ENCODE measurements at regions of chr11 and their contacts with region 1.

Region 1: GRCh38 chr11:7571640-7572000 is 57.8 kb downstream of the PPFIBP2 start:
- DNase-seq: no peak
- ATAC-seq: peak; percentile 47
- H3K4me3 ChIP-seq: no peak overlapping the region
- H3K27ac ChIP-seq: no peak overlapping the region
- H3K4me1 ChIP-seq: peaks cover 11% of the 10 kb centered on the region
- H3K27me3 ChIP-seq: no peaks in the 10 kb centered on the region
- CTCF ChIP-seq: peak; percentile 58 to 74 (median 69)
- EP300 ChIP-seq: no peak
- POLR2A ChIP-seq: no peak
- RAD21 ChIP-seq: peak; percentile 60; the same call in 1 of the 2 replicates

Region 2: GRCh38 chr11:7555052-7555699 is 16.4 kb before region 1 on chr11:
- CTCF ChIA-PET with region 1: interaction called, 12 read pairs
- POLR2A ChIA-PET with region 1: no interaction called
- RAD21 ChIA-PET with region 1: interaction called, 11 read pairs
- SMC1A ChIA-PET with region 1: interaction called, 27 read pairs
- in situ Hi-C with region 1: no loop called
- intact Hi-C with region 1: no loop called
- DNase-seq: no peak
- ATAC-seq: no peak
- H3K4me3 ChIP-seq: no peak overlapping the region
- H3K27ac ChIP-seq: no peak overlapping the region
- H3K4me1 ChIP-seq: peaks cover 16% of the 10 kb centered on the region
- H3K27me3 ChIP-seq: no peaks in the 10 kb centered on the region
- CTCF ChIP-seq: no peak
- EP300 ChIP-seq: no peak
- POLR2A ChIP-seq: no peak
- RAD21 ChIP-seq: no peak

Region 3: GRCh38 chr11:7585816-7586215 is 14.2 kb after region 1 on chr11:
- CTCF ChIA-PET with region 1: interaction called, 11 read pairs
- POLR2A ChIA-PET with region 1: interaction called, 3 read pairs
- RAD21 ChIA-PET with region 1: interaction called, 3 read pairs
- SMC1A ChIA-PET with region 1: interaction called, 21 read pairs
- in situ Hi-C with region 1: no loop called
- intact Hi-C with region 1: no loop called
- DNase-seq: no peak
- ATAC-seq: no peak
- H3K4me3 ChIP-seq: no peak overlapping the region
- H3K27ac ChIP-seq: no peak overlapping the region
- H3K4me1 ChIP-seq: 0 out of 2 replicates have a peak, but pooled peaks cover 4% of the 10 kb centered on the region
- H3K27me3 ChIP-seq: no peaks in the 10 kb centered on the region
- CTCF ChIP-seq: no peak
- EP300 ChIP-seq: no peak
- POLR2A ChIP-seq: no peak
- RAD21 ChIP-seq: no peak

Region 4: GRCh38 chr11:7657306-7658025 is 85.8 kb after region 1 on chr11:
- CTCF ChIA-PET with region 1: interaction called, 15 read pairs
- POLR2A ChIA-PET with region 1: no interaction called
- RAD21 ChIA-PET with region 1: interaction called, 7 read pairs
- SMC1A ChIA-PET with region 1: interaction called, 4 read pairs
- in situ Hi-C with region 1: no loop called
- intact Hi-C with region 1: no loop called
- DNase-seq: no peak
- ATAC-seq: peak; percentile 83
- H3K4me3 ChIP-seq: no peak overlapping the region
- H3K27ac ChIP-seq: no peak overlapping the region
- H3K4me1 ChIP-seq: no peaks in the 10 kb centered on the region
- H3K27me3 ChIP-seq: no peaks in the 10 kb centered on the region
- CTCF ChIP-seq: peak in 2 of 3 experiments; percentile 17 to 53; a peak in 3 of 6 replicates
- EP300 ChIP-seq: no peak
- POLR2A ChIP-seq: no peak
- RAD21 ChIP-seq: peak; percentile 51

Region 5: DNA sequence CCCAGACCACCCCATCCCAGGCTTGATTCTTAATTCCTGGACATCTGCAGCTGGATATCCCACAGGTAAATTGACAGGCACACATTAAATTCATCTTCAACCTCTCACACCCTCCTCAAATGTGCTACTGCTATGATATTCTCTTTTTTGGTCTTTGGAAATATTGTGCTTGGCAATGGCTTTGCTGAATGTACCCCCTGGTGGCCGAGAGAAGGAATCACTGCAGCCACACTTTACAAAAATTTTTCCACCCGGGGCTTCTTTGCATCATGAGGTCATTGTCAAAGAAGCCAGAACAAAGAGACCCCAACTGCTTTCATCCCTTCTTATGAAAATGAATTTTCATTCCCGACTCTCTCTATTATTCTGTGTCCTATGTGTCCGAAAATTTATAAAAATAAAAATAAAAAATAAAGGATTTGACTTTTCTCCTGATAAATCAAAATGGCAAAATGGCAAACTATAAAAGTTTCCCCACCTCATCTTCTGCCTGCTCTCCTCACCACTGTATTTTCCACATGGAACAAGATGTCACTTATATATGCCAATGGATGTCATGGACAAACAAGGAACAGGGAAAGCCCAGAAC is 116.7 kb after region 1 on chr11:
- CTCF ChIA-PET with region 1: interaction called, 13 read pairs
- POLR2A ChIA-PET with region 1: no interaction called
- RAD21 ChIA-PET with region 1: interaction called, 3 read pairs
- SMC1A ChIA-PET with region 1: interaction called, 12 read pairs
- in situ Hi-C with region 1: no loop called
- intact Hi-C with region 1: loop called (anchors 1 kb)
- DNase-seq: no peak
- ATAC-seq: peak; percentile 84
- H3K4me3 ChIP-seq: no peak overlapping the region
- H3K27ac ChIP-seq: no peak overlapping the region
- H3K4me1 ChIP-seq: no peaks in the 10 kb centered on the region
- H3K27me3 ChIP-seq: peaks cover 0 to 2% of the 10 kb centered on the region in 2 experiments; a peak in 2 of 4 replicates
- CTCF ChIP-seq: peak; percentile 76 to 80 (median 79)
- EP300 ChIP-seq: no peak
- POLR2A ChIP-seq: no peak
- RAD21 ChIP-seq: peak; percentile 80